Transverse colon (tissue), 4 donors: ENCODE measurements at regions of chr2 and their contacts with region 1.

Region 1: DNA sequence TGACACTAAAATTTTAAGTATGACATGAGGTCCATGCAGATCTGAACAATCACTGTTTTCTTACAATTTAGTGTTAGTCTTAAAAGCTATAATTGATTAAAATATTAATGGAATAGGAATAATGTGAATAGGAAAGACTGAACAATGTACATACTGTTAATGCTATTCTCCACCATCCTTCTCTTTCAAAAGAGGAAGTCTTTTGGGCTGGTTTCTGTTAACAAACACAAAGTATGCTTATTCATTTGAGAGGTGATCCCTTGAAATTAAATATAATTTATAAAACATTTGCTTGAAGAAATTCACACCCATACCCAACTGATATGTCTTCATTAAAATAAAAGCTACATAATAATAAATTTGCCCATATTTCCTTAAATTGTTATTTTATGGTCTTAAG is 2.3 kb downstream of the STPG4 start:
- DNase-seq: no peak
- H3K4me3 ChIP-seq: no peak overlapping the region
- H3K27ac ChIP-seq: no peak overlapping the region
- H3K4me1 ChIP-seq: peaks cover 0 to 10% (median 5%) of the 10 kb centered on the region in 4 donors
- H3K27me3 ChIP-seq: no peaks in the 10 kb centered on the region
- CTCF ChIP-seq: no peak
- EP300 ChIP-seq: no peak
- POLR2A ChIP-seq: no peak

Region 2: GRCh38 chr2:46943881-46944798 is 208.7 kb before region 1 on chr2:
- in situ Hi-C with region 1: no loop called
- intact Hi-C with region 1: no loop called
- DNase-seq: no peak
- H3K4me3 ChIP-seq: no peak overlapping the region
- H3K27ac ChIP-seq: peak overlapping the region; percentile 13 to 92 (median 56)
- H3K4me1 ChIP-seq: peaks cover 12 to 54% (median 35%) of the 10 kb centered on the region in 4 donors
- H3K27me3 ChIP-seq: no peaks in the 10 kb centered on the region
- CTCF ChIP-seq: no peak
- EP300 ChIP-seq: no peak
- POLR2A ChIP-seq: no peak

Region 3: DNA sequence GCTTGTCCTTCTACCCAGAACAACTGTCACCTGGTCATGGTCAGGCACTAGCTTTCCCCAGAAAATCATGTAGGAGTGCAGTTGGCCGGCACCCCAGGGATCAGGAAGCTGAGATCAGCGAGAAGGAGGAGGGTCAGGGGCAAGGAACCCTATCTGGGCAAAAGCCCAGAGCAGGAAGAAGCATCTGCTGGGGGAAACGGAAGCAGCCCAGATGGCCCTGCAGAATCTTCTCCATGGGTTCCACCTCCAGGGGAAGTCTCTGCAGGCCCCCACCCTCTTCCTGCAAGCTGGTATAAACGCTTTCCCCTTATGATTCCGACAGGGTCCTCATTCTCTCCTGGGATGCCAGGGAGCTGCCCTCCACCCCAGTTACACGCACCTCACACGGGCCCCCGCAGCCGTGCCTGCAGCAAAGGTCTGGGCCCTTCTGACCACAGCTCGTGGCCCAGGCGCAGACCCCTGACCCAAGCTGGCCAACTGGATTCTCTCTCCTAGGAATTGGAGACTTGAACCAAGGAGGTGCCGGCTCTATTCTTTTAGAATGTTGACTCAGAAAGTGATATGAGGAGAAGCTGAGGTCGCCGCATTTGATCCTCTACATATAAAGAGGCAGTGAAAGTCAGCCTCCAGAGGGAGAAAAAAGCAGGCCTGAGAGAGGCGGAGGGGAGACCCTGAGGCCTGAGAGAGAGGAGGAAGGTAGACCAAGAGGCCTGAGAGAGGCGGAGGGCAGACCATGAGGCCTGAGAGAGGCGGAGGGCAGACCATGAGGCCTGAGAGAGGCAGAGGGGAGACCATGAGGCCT is 68.7 kb before region 1 on chr2:
- in situ Hi-C with region 1: no loop called
- intact Hi-C with region 1: loop called (anchors 2 kb)
- DNase-seq: no peak
- H3K4me3 ChIP-seq: no peak overlapping the region
- H3K27ac ChIP-seq: peak overlapping the region; percentile 18 to 38 (median 23)
- H3K4me1 ChIP-seq: peaks cover 24 to 52% (median 34%) of the 10 kb centered on the region in 4 donors
- H3K27me3 ChIP-seq: no peaks in the 10 kb centered on the region
- CTCF ChIP-seq: no peak
- EP300 ChIP-seq: no peak
- POLR2A ChIP-seq: no peak